ENCODE measurements at regions of chr6 and their contacts with region 1.

Region 1: DNA sequence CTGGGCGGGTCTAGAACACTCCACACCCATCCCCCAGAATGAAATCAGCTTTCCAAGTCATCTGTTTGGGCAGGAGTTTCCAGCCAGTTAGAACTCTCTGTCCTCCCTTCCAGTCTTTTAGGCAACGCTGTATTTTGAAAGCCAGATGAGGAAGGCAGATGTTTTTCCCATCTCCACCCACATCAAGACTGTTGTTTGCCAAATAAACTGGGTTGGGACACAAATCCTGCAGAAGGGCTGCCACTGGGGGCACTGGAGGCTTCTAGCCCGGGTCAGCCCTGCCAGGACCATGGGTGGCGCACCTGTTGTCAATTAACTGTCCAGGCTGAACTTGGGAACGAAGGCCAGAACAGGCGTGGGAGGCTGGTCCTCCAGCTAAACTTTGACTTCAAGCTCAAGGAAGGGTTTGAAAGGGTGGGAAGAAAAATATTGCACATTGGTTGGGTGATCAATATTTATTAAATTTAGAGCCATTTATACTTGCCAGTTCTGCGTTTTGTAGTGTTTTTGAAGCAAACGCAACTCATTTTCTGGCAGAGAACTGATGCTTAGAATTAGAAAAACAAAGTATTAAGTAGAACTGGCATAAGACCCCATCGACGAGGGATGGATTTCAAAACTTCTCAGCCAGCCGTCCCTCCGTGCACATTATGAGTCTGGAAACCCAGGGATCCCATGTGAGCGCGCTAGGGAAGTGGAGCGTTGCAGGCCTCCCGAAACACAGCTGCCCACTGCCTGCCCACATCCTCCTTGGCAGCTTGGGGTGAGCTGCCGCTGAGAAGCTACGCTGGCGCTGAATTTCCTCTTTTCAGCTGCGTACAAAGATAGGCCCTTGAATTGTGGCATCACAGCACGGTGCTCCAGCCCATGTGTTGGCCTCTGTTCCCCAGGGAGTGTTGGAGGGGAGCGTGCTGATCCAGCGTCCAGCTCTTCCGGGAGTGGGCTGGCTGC is 297.4 kb downstream of the QKI start:
- DNase-seq: peak; percentile 80 to 83
- ATAC-seq: peak; percentile 67 to 81 (median 76)
- H3K4me3 ChIP-seq: no peak overlapping the region
- H3K27ac ChIP-seq: peak overlapping the region; percentile 69 to 86 (median 80)
- H3K4me1 ChIP-seq: peaks cover 28 to 68% (median 61%) of the 10 kb centered on the region in 9 donors
- H3K27me3 ChIP-seq: no peaks in the 10 kb centered on the region
- CTCF ChIP-seq: peak in 8 of 9 donors; percentile 17 to 59 (median 39)

Region 2: GRCh38 chr6:163338671-163339405 is 373.1 kb before region 1 on chr6:
- intact Hi-C with region 1: loop called in 2 of 10 experiments (anchors 5 to 10 kb)
- DNase-seq: peak in 1 of 2 donors; percentile 72
- ATAC-seq: peak; percentile 40 to 77 (median 64)
- H3K4me3 ChIP-seq: peak overlapping the region in 1 of 10 donors; percentile 5
- H3K27ac ChIP-seq: peak overlapping the region; percentile 71 to 98 (median 86)
- H3K4me1 ChIP-seq: peaks cover 28 to 88% (median 58%) of the 10 kb centered on the region in 9 donors
- H3K27me3 ChIP-seq: no peaks in the 10 kb centered on the region
- CTCF ChIP-seq: no peak

Region 3: DNA sequence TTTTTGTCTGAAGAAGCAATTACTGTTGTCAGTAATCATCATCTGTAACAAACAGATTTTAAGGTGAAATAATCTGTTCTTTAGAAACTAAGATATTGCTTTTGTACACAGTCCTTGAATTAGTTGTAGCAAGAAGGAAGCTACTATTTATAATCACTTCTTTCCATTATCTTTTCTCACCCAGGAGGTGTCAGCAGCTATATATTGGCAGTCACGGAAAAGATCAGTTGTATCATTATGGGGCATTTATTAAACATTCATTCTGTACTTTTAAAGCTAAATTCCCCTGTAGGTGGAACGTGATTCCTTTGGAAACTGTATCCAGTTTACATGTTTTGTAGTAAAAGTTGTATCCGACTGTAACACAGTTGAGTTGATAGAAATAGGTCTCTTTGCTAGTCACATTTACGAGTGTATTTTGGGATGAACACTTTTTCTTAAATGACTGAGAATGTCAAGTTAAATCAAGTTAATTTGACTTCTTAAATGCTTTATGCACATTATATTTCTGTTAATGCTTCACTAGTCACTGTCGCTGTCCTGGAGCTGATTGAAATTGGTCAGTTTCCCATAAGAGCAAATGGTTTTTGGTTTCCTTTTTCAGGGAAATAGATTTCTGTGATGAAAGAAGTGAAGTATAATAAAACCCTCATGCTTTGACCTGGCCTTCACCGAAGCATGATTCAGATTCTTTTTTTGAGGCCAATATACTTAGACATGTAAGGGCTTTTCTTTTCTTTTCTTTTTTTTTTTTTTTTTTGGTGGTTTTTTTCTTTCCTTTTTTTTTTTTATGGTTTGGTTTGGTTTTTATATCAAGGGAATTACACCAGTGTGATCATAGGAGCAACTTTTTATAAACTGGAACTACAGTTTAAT is 292.2 kb before region 1 on chr6:
- intact Hi-C with region 1: loop called in 4 of 10 experiments (anchors 2 to 10 kb)
- DNase-seq: no peak
- ATAC-seq: no peak
- H3K4me3 ChIP-seq: peak overlapping the region; percentile 5 to 93 (median 89)
- H3K27ac ChIP-seq: peak overlapping the region; percentile 67 to 100 (median 99)
- H3K4me1 ChIP-seq: peaks cover 5 to 78% (median 53%) of the 10 kb centered on the region in 9 donors
- H3K27me3 ChIP-seq: no peaks in the 10 kb centered on the region
- CTCF ChIP-seq: no peak

Region 4: GRCh38 chr6:163585932-163586437 is 125.9 kb before region 1 on chr6:
- intact Hi-C with region 1: loop called in 2 of 10 experiments (anchors 5 kb)
- DNase-seq: peak; percentile 49 to 68
- ATAC-seq: peak; percentile 65 to 90 (median 79)
- H3K4me3 ChIP-seq: peak overlapping the region in 2 of 10 donors; percentile 1 to 8
- H3K27ac ChIP-seq: peak overlapping the region in 8 of 10 donors; percentile 27 to 63 (median 47)
- H3K4me1 ChIP-seq: peaks cover 4 to 58% (median 28%) of the 10 kb centered on the region in 9 donors
- H3K27me3 ChIP-seq: no peaks in the 10 kb centered on the region
- CTCF ChIP-seq: no peak

Region 5: DNA sequence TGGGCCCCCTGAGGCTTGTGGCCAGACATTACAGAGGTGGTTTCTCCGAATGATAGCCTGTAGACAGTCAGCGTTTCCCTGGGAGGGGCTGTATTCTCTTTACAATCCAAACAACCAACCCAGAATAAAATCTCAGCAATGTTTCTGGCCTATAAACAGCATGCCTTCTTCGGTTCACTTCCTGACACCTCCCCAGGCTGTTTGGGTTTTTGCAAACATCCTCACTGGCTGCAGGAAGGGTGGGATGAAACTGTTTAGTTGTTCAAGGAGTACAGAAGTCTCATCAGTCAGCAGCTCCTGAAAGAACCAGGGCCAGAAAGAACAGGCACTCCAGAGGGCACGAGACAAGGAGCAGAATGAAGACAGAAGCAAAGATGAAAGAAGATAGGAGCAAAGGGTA is 52.7 kb after region 1 on chr6:
- intact Hi-C with region 1: loop called in 2 of 10 experiments (anchors 2 to 5 kb)
- DNase-seq: no peak
- ATAC-seq: peak in 5 of 8 donors; percentile 49 to 82 (median 68)
- H3K4me3 ChIP-seq: no peak overlapping the region
- H3K27ac ChIP-seq: peak overlapping the region in 9 of 10 donors; percentile 8 to 74 (median 45)
- H3K4me1 ChIP-seq: peaks cover 0 to 23% (median 20%) of the 10 kb centered on the region in 9 donors
- H3K27me3 ChIP-seq: no peaks in the 10 kb centered on the region
- CTCF ChIP-seq: no peak

Region 6: GRCh38 chr6:163943607-163944385 is 231.9 kb after region 1 on chr6:
- intact Hi-C with region 1: loop called in 4 of 10 experiments (anchors 5 to 10 kb)
- DNase-seq: peak; percentile 37 to 58
- ATAC-seq: peak; percentile 44 to 88 (median 63)
- H3K4me3 ChIP-seq: peak overlapping the region in 1 of 10 donors; percentile 8
- H3K27ac ChIP-seq: peak overlapping the region in 8 of 10 donors; percentile 17 to 65 (median 32)
- H3K4me1 ChIP-seq: peaks cover 0 to 45% (median 38%) of the 10 kb centered on the region in 9 donors
- H3K27me3 ChIP-seq: no peaks in the 10 kb centered on the region
- CTCF ChIP-seq: no peak